Cardiac septum (tissue), 1 donor: ENCODE measurements at regions of chr9 and their contacts with region 1.

Region 1: GRCh38 chr9:129641746-129642513 is at the start of gene ASB6:
- DNase-seq: peak; percentile 99
- total RNA-seq, gene ASB6: 10.2 TPM

Region 2: GRCh38 chr9:129737479-129738274 is 95.7 kb after region 1 on chr9:
- intact Hi-C with region 1: loop called (anchors 5 kb)
- DNase-seq: peak; percentile 93